Colonic mucosa (tissue), 4 donors: ENCODE measurements at regions of chr20 and their contacts with region 1.

Region 1: GRCh38 chr20:2523919-2524708 is 12.3 kb upstream of the TMC2 start:
- DNase-seq: peak; percentile 93
- H3K4me3 ChIP-seq: peak overlapping the region; percentile 49
- H3K27ac ChIP-seq: peak overlapping the region; percentile 72
- H3K4me1 ChIP-seq: no peaks in the 10 kb centered on the region
- H3K27me3 ChIP-seq: no peaks in the 10 kb centered on the region
- CTCF ChIP-seq: peak; percentile 98

Region 2: GRCh38 chr20:2451939-2452732 is 72.0 kb before region 1 on chr20:
- intact Hi-C with region 1: no loop called
- DNase-seq: peak; percentile 81
- H3K4me3 ChIP-seq: no peak overlapping the region
- H3K27ac ChIP-seq: no peak overlapping the region
- H3K4me1 ChIP-seq: no peaks in the 10 kb centered on the region
- H3K27me3 ChIP-seq: no peaks in the 10 kb centered on the region
- CTCF ChIP-seq: peak; percentile 86

Region 3: DNA sequence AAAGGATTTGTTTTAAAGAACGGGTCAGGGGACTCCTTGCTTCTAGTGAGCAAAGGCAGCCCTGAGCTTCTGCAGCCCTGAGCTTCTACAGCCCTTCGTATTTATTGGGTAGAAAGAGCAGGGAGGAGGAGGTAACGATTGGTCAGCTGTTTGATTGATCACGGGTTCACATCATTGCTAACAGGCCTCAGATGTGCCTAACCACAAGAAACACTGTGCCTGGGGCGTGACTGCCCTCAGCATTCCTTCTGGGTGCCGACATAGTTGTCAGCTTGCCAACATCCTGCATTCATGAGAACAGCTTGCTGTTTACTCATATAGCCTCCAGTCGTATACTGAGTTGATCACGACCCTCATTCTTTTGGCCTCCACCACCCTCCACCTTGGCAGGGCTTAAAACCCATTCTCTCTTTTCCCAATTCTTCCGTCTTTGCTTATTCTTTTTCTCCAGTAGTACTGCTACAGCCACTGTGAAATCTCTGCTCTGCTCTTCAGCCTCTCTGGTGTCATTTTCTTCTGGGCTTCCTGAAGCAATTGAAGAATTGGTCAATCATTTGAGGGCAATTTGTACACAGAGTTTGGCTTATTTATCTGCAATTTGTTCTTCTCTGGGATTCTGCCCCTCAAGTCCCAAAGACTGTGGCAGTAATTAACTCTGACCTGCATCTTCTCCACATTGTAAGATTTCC is 102.9 kb after region 1 on chr20:
- intact Hi-C with region 1: no loop called
- DNase-seq: peak; percentile 70
- H3K4me3 ChIP-seq: no peak overlapping the region
- H3K27ac ChIP-seq: no peak overlapping the region
- H3K4me1 ChIP-seq: no peaks in the 10 kb centered on the region
- H3K27me3 ChIP-seq: no peaks in the 10 kb centered on the region
- CTCF ChIP-seq: no peak

Region 4: DNA sequence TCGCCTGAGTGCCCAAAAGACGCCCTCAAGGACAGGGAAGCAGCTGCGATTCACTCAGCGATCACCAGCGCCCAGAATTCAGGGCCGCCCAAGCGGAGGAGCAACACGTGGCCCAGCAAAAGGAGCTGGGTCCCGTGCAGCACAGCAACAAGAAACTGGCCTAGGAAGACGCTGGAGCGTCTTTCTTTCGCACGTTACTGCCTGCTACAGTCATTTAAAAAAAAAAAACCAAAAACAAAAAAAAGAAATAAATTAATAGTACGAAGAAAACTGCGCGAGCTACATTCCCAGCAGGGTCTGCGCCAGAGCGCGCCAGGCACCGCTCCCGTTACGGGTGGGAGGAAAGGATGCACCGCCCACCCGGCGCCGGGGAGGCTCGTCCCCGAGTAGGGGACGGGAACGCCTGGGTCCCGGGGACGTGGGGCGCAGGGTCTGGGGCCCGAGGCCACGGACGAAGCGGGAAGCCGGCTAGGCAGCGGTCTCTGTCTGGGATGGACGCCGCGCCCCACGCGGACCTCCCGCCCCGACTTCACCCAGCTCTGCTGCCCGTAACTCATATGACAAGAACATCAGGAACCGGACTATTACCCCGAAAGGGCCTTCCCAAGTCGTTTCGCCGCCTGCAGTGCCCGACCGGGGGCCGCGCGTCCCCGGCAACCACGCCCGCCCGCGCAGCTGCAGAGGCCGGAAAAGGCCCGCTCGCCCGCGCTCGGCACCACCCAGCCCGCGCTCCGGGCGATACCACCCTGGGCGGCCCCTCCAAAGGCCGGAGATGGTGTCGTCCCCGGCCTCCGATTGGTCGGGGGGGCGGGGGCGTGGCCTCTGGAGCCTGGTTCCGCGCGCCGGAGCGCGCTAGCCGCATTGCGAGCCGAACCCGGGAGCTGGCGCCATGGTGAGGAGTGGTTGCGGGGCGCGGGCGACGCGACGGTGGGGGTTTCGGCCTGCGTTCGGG is 127.9 kb after region 1 on chr20 and contains the start of gene NOP56:
- intact Hi-C with region 1: loop called (anchors 5 kb)
- DNase-seq: peak; percentile 93
- H3K4me3 ChIP-seq: peak within 1 kb of the TSS; percentile 83
- H3K27ac ChIP-seq: peak within 1 kb of the TSS; percentile 89
- H3K4me1 ChIP-seq: peaks cover 12% of the 10 kb centered on the region
- H3K27me3 ChIP-seq: no peaks in the 10 kb centered on the region
- CTCF ChIP-seq: no peak
- total RNA-seq, gene NOP56: 66.3 to 186 TPM

Region 5: DNA sequence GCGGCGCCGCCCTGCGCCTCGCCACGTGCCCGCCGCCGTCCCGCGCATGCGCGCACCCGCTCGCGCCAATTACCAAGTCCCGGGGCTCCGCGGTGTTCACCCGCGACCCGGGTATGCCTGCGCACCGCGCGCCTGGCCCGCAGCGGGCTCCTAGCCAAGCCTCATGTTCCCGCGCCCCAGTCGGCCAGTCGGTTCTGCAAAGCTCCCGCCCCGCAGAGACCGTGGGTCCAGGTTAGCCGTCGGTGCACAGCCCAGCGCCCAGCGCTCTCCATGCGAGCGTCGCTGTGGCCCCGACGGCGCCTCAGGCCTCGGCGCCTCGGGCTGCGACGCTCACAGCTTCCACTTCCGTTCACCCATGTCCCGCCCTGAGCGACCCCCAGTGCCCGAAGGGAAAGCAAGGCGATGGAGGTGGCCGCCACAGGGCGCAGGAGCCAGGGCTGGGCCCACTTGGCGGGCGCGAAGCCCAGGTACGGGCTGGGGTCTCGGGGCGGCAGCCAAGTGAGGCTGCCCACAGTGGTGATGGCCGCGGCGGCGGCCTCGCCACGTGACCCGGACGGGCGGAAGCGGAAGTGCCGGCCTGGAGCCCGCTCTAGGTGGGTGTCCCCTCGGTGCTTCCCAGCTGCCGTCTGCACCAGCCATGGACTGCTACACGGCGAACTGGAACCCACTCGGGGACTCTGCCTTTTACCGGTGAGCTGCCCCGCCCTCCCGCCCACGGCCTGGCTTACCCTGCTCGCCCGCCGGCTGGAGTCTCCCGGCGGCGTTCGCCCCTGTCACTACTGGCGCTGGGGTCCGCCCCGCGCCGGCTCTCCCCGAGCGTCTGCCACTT is 316.2 kb after region 1 on chr20 and contains the starts of genes PCED1A and VPS16:
- intact Hi-C with region 1: loop called (anchors 10 kb)
- DNase-seq: peak; percentile 86
- H3K4me3 ChIP-seq: peak within 1 kb of the TSS; percentile 86
- H3K27ac ChIP-seq: peak within 1 kb of the TSS; percentile 76
- H3K4me1 ChIP-seq: peaks cover 6% of the 10 kb centered on the region
- H3K27me3 ChIP-seq: no peaks in the 10 kb centered on the region
- CTCF ChIP-seq: no peak
- total RNA-seq, gene PCED1A: 21.7 to 24.8 TPM
- total RNA-seq, gene VPS16: 35.7 to 40.5 TPM